ENCODE measurements at regions of chr4 and their contacts with region 1.

Region 1: GRCh38 chr4:158193171-158193749 is 17.0 kb upstream of the TMEM144 start:
- DNase-seq: no peak
- H3K4me3 ChIP-seq: no peak overlapping the region
- H3K27ac ChIP-seq: no peak overlapping the region
- H3K4me1 ChIP-seq: no peaks in the 10 kb centered on the region
- H3K27me3 ChIP-seq: no peaks in the 10 kb centered on the region
- CTCF ChIP-seq: peak; percentile 41

Region 2: GRCh38 chr4:158229768-158230167 is 36.5 kb after region 1 on chr4:
- intact Hi-C with region 1: no loop called
- DNase-seq: no peak
- H3K4me3 ChIP-seq: no peak overlapping the region
- H3K27ac ChIP-seq: no peak overlapping the region
- H3K4me1 ChIP-seq: no peaks in the 10 kb centered on the region
- H3K27me3 ChIP-seq: no peaks in the 10 kb centered on the region
- CTCF ChIP-seq: no peak

Region 3: DNA sequence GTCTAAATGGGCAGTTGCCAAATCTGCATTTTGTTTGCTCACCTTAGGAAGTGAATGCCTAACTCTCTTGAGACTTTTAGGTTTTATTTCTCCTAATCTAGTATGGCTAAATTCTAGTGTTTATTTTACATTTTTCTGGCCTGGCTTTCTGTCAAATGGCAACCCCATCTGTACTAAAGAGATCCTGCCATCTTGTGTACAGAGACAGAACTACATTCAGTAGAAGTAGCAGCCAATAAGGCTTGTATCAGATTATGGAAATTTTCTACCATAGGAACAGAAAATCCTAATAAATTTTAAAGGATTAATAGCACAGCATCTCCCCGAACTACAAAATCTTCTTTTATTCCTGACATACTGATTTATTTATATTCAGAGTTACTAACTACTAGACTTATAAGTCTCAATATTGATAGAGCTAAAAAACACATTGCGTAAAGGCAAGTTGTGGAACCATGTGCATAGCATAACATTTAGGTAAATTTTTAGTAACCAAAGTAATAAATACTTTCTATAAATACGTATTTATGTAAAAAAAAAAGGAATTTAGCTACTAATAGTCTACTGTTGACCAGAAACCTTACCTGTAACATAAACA is 62.6 kb after region 1 on chr4:
- intact Hi-C with region 1: loop called (anchors 2 kb)
- DNase-seq: no peak
- H3K4me3 ChIP-seq: no peak overlapping the region
- H3K27ac ChIP-seq: no peak overlapping the region
- H3K4me1 ChIP-seq: no peaks in the 10 kb centered on the region
- H3K27me3 ChIP-seq: no peaks in the 10 kb centered on the region
- CTCF ChIP-seq: peak; percentile 70

Region 4: GRCh38 chr4:158295053-158295452 is 101.8 kb after region 1 on chr4:
- intact Hi-C with region 1: no loop called
- DNase-seq: no peak
- H3K4me3 ChIP-seq: no peak overlapping the region
- H3K27ac ChIP-seq: no peak overlapping the region
- H3K4me1 ChIP-seq: no peaks in the 10 kb centered on the region
- H3K27me3 ChIP-seq: no peaks in the 10 kb centered on the region
- CTCF ChIP-seq: no peak

Region 5: GRCh38 chr4:158428242-158428641 is 235.0 kb after region 1 on chr4:
- intact Hi-C with region 1: no loop called
- DNase-seq: no peak
- H3K4me3 ChIP-seq: no peak overlapping the region
- H3K27ac ChIP-seq: no peak overlapping the region
- H3K4me1 ChIP-seq: no peaks in the 10 kb centered on the region
- H3K27me3 ChIP-seq: no peaks in the 10 kb centered on the region
- CTCF ChIP-seq: no peak

Measured in colonic mucosa (tissue), 4 donors.